Activated CD4-positive, alpha-beta T cell treated with anti-CD3 and anti-CD28 coated beads, Interleukin-2, amount 10 ng/mL, durations not matched to agents 24 days and 14 days (primary cell): ENCODE measurements at regions of chr11 and their contacts with region 1.

Region 1: GRCh38 chr11:58579192-58580129 is 598 bp downstream of the ZFP91 start:
- DNase-seq: peak; percentile 97
- H3K4me3 Mint-ChIP-seq: peak overlapping the region; percentile 93
- H3K27ac Mint-ChIP-seq: peak overlapping the region; percentile 100
- H3K4me1 Mint-ChIP-seq: peaks cover 66% of the 10 kb centered on the region
- H3K27me3 Mint-ChIP-seq: peaks cover 4% of the 10 kb centered on the region

Region 2: GRCh38 chr11:57530596-57531507 is 1048.6 kb before region 1 on chr11 and contains the start of gene TIMM10:
- intact Hi-C with region 1: loop called (anchors 1 kb)
- DNase-seq: peak; percentile 98
- H3K4me3 Mint-ChIP-seq: peak within 1 kb of the TSS; percentile 89
- H3K27ac Mint-ChIP-seq: peak within 1 kb of the TSS; percentile 85
- H3K4me1 Mint-ChIP-seq: peaks cover 32% of the 10 kb centered on the region
- H3K27me3 Mint-ChIP-seq: no peaks in the 10 kb centered on the region
- total RNA-seq, gene TIMM10: 108 and 112 TPM in 2 replicates

Region 3: GRCh38 chr11:57667736-57668435 is 911.6 kb before region 1 on chr11 and contains the start of gene ZDHHC5:
- intact Hi-C with region 1: loop called (anchors 1 kb)
- DNase-seq: peak; percentile 100
- H3K4me3 Mint-ChIP-seq: peak within 1 kb of the TSS; percentile 86
- H3K27ac Mint-ChIP-seq: peak within 1 kb of the TSS; percentile 97
- H3K4me1 Mint-ChIP-seq: peaks cover 35% of the 10 kb centered on the region
- H3K27me3 Mint-ChIP-seq: no peaks in the 10 kb centered on the region
- total RNA-seq, gene ZDHHC5: 78.4 and 80.9 TPM in 2 replicates

Region 4: DNA sequence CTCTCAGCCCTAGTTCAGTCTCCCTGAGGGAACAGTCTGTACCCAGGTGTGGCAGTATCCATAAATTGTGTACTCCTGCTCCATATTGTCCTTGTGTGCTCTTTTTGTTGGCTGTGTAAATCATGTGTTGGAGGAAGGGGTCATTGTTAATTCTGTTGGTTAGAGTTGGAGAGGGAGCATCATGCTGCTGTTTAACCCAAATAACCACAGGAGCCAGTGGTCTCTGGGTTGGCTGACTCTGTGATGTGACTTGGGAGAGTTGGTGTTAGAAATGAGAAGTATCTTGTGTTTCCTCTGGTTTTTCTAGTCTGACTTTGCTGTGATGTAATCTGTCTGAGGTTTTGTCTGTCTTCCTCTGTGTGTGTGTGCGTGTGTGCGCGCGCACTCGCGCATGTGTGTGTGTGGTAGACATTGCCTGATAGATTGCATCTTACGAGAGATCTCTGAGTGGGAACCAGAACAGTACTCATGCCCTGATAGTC is 787.4 kb before region 1 on chr11:
- intact Hi-C with region 1: loop called (anchors 2 kb)
- DNase-seq: peak; percentile 95
- H3K4me3 Mint-ChIP-seq: peak overlapping the region; percentile 79
- H3K27ac Mint-ChIP-seq: peak overlapping the region; percentile 93
- H3K4me1 Mint-ChIP-seq: peaks cover 41% of the 10 kb centered on the region
- H3K27me3 Mint-ChIP-seq: no peaks in the 10 kb centered on the region

Region 5: GRCh38 chr11:58503361-58503856 is 76.1 kb before region 1 on chr11:
- intact Hi-C with region 1: no loop called
- DNase-seq: no peak
- H3K4me3 Mint-ChIP-seq: no peak overlapping the region
- H3K27ac Mint-ChIP-seq: no peak overlapping the region
- H3K4me1 Mint-ChIP-seq: peaks cover 9% of the 10 kb centered on the region
- H3K27me3 Mint-ChIP-seq: no peaks in the 10 kb centered on the region

Region 6: GRCh38 chr11:58609723-58610122 is 30.3 kb after region 1 on chr11:
- intact Hi-C with region 1: loop called (anchors 1 kb)
- DNase-seq: no peak
- H3K4me3 Mint-ChIP-seq: no peak overlapping the region
- H3K27ac Mint-ChIP-seq: no peak overlapping the region
- H3K4me1 Mint-ChIP-seq: peaks cover 37% of the 10 kb centered on the region
- H3K27me3 Mint-ChIP-seq: no peaks in the 10 kb centered on the region

Region 7: GRCh38 chr11:58788355-58789023 is 209.0 kb after region 1 on chr11:
- intact Hi-C with region 1: loop called (anchors 2 kb)
- DNase-seq: peak; percentile 82
- H3K4me3 Mint-ChIP-seq: no peak overlapping the region
- H3K27ac Mint-ChIP-seq: no peak overlapping the region
- H3K4me1 Mint-ChIP-seq: no peaks in the 10 kb centered on the region
- H3K27me3 Mint-ChIP-seq: peaks cover 2% of the 10 kb centered on the region

Region 8: DNA sequence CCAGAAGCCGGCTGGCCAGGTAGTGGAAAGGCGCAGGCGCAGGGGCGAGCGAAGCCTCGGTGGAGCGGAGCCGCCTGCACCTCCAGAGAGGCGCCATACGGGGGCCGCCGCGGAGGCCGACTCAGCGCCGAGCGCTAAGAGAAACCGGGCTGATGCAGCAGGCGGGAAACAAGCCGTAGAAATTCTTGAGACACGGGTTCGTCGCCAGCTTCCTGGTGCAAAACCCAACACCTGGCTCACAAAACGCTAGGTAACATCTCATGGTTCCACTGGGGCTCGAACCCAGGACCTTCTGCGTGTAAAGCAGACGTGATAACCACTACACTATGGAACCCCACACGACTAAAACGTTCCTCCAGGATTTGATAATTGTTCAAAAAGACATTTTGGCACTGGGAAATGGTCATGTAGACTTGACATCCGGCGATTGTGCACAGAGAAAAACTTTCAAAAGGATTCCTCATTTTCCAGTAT is 970.9 kb after region 1 on chr11:
- intact Hi-C with region 1: loop called (anchors 2 kb)
- DNase-seq: peak; percentile 95
- H3K4me3 Mint-ChIP-seq: peak overlapping the region; percentile 85
- H3K27ac Mint-ChIP-seq: peak overlapping the region; percentile 88
- H3K4me1 Mint-ChIP-seq: peaks cover 22% of the 10 kb centered on the region
- H3K27me3 Mint-ChIP-seq: peaks cover 15% of the 10 kb centered on the region